PC-3 (cell line): ENCODE measurements at regions of chr6 and their contacts with region 1.

Region 1: DNA sequence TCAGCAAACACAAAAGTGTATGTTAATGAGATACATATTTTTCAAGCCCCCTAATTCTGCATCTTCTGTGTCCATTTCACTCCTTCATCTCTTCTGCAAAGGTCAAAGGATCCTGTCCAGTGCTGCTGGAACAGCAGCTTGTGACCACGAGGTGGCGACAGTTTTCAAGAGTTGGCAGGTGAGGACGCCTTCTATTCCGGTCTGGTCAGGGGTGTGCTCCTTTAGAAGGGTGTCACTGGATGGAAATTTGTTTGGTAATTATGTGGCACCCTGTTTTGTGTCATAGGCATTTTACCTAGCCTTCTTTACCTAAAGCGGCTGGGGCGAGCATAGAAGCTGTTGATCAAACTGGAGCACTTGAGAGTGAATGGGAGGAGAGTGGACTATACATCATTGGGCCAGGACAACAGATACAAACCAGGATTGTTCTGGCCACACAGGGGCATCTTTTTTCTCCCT is 32.9 kb upstream of the ERVFRD-1 start:
- DNase-seq: peak; percentile 86
- ATAC-seq: peak; percentile 92
- H3K4me3 ChIP-seq: no peak overlapping the region
- H3K27ac ChIP-seq: no peak overlapping the region
- H3K4me1 ChIP-seq: peaks cover 15% of the 10 kb centered on the region
- H3K27me3 ChIP-seq: no peaks in the 10 kb centered on the region
- CTCF ChIP-seq: peak; percentile 99

Region 2: DNA sequence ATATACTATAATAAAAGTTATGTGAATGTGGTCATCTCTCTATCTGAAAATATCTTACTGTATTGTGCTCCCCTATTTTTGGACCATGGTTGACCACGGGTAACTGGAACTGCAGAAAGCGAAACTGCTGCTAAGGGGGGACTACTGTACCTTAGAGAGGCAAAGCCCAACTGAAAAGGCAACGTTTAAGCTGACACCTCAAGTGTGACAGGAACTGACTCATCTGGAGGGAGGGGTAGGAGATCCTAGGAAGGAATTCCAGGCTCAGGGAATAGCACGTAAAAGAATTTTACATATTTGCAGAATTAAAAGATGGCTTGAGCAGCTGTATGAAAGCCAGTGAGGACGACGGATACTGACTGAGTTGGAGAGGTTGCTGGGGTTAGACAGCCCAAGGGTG is 135.1 kb before region 1 on chr6:
- CTCF ChIA-PET with region 1: no interaction called
- POLR2A ChIA-PET with region 1: no interaction called
- intact Hi-C with region 1: no loop called
- DNase-seq: peak; percentile 62
- ATAC-seq: peak; percentile 17
- H3K4me3 ChIP-seq: peak overlapping the region; percentile 24
- H3K27ac ChIP-seq: peak overlapping the region; percentile 76; the same call in 1 of the 2 replicates
- H3K4me1 ChIP-seq: peaks cover 42% of the 10 kb centered on the region
- H3K27me3 ChIP-seq: no peaks in the 10 kb centered on the region
- CTCF ChIP-seq: no peak

Region 3: DNA sequence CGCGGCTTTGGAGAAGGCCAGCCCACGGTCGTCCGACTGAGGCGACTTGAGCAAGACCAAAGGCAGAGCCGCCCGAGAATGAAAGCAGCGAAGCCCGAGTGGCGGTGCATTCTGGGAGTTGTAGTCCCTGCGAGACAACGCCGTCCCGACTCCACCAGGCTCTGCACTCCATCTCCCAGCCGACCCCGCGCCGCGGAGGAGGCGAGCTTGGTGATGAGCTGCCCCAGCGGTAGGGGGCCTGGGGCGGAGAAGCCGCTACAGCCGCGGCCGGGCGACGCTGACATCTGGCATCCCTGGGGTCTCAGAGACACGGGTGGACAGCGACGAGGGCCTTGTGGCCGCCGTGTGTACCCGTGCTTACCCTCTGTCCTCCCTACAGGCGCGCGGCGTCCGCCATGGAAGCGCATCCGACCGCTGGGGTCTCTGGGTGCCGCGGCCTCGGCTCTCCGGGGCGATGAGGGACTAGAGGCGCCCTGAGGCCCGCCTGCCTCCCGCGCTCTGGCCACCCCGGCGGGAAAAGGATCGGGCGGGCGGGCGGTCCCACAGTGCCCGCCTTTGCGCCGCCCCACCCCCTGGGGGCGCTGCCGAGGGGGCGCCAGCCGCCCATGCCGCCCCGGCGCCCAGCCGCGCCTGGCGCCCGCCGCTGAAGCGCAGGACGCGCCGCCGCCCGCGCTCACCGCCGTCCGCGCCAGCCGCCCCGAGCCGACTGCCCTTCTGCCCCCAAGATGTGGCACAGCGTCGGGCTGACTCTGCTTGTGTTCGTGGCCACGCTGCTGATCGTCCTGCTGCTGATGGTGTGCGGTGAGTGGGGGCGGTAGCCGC is 50.6 kb before region 1 on chr6 and contains the start of gene SMIM13:
- CTCF ChIA-PET with region 1: no interaction called
- POLR2A ChIA-PET with region 1: no interaction called
- intact Hi-C with region 1: loop called (anchors 2 kb)
- DNase-seq: peak; percentile 98
- ATAC-seq: peak; percentile 95
- H3K4me3 ChIP-seq: peak within 1 kb of the TSS; percentile 96
- H3K27ac ChIP-seq: peak within 1 kb of the TSS; percentile 69
- H3K4me1 ChIP-seq: peaks cover 18% of the 10 kb centered on the region
- H3K27me3 ChIP-seq: no peaks in the 10 kb centered on the region
- CTCF ChIP-seq: peak; percentile 45
- total RNA-seq, gene SMIM13: 7.1 and 9.0 TPM in 2 replicates

Region 4: DNA sequence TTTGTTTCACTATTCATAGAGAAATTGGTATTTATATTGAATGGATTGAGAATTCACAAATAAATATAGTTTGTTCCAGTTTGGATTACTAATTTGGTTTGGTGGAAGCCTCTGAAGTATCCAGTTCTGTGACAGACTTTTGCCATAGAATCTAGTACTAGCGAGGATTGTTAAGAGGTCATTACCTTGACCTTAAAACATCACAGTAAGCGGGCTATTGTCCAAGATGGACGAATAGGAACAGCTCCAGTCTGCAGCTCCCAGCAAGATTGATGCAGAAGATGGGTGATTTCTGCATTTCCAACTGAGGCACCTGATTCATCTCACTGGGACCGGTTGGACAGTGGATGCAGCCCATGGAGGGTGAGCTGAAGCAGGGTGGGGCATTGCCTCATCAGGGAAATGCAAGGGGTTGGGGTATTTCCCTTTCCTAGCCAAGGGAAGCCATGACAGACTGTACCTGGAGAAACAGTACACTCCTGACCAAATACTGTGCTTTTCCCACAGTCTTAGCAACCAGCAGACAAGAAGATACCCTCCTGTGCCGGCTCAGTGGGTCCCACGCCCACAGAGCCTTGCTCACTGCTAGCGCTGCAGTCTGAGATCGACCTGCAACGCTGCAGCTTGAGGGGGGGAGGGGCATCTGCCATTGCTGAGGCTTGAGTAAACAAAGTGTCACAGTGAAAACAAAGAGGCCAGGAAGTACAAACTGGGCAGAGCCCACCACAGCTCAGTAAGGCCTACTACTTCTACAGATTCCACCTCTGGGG is 154.4 kb after region 1 on chr6:
- CTCF ChIA-PET with region 1: no interaction called
- POLR2A ChIA-PET with region 1: interaction called, 9 read pairs
- intact Hi-C with region 1: loop called (anchors 5 kb)
- DNase-seq: peak; percentile 39
- ATAC-seq: peak; percentile 66
- H3K4me3 ChIP-seq: no peak overlapping the region
- H3K27ac ChIP-seq: no peak overlapping the region
- H3K4me1 ChIP-seq: peaks cover 8% of the 10 kb centered on the region; the same call in 1 of the 2 replicates
- H3K27me3 ChIP-seq: no peaks in the 10 kb centered on the region
- CTCF ChIP-seq: no peak

Region 5: GRCh38 chr6:11434565-11435326 is 290.3 kb after region 1 on chr6:
- CTCF ChIA-PET with region 1: no interaction called
- POLR2A ChIA-PET with region 1: no interaction called
- intact Hi-C with region 1: loop called (anchors 10 kb)
- DNase-seq: peak; percentile 97
- ATAC-seq: peak; percentile 85
- H3K4me3 ChIP-seq: no peak overlapping the region
- H3K27ac ChIP-seq: peak overlapping the region; percentile 98
- H3K4me1 ChIP-seq: peaks cover 53% of the 10 kb centered on the region
- H3K27me3 ChIP-seq: no peaks in the 10 kb centered on the region
- CTCF ChIP-seq: no peak

Region 6: DNA sequence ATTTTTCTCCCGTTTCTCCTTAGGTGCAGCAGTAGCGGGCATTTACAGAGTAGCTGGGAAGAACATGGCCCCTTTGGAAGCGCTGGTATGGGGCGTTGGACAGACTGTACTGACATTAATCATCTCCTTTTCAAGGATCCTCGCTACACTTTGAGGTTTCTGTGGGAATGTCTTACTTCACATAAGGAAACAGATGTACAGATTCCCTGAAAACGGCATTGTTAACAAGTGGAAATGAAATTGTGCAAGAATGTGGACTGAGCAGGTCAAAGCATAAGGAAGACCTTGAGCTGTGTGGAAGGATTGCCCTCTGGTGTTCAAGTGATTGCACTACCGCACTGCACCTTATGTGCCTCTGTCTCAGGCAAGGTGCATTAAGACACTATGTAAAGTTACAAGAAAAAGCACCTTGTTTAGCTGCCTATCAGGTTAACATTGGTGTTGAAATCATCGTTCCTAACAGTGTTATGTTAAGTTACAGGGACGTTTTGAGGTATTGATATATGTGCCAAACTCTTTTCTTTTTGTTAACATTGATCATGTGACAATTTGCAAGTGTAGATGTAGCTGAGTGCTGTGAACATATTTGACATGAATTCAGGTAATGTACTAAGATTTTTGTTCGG is 431.1 kb after region 1 on chr6:
- CTCF ChIA-PET with region 1: no interaction called
- POLR2A ChIA-PET with region 1: no interaction called
- intact Hi-C with region 1: loop called (anchors 2 kb)
- DNase-seq: peak; percentile 85
- ATAC-seq: peak; percentile 100
- H3K4me3 ChIP-seq: peak overlapping the region; percentile 21
- H3K27ac ChIP-seq: no peak overlapping the region
- H3K4me1 ChIP-seq: 0 out of 2 replicates have a peak, but pooled peaks cover 3% of the 10 kb centered on the region
- H3K27me3 ChIP-seq: no peaks in the 10 kb centered on the region
- CTCF ChIP-seq: peak; percentile 95